A673 (cell line): ENCODE measurements at regions of chr5 and their contacts with region 1.

Region 1: GRCh38 chr5:102536323-102536928 is 37.6 kb upstream of the SLCO6A1 start:
- DNase-seq: peak; percentile 42
- H3K4me3 ChIP-seq: no peak overlapping the region
- H3K27ac ChIP-seq: no peak overlapping the region
- H3K4me1 ChIP-seq: no peaks in the 10 kb centered on the region
- H3K27me3 ChIP-seq: no peaks in the 10 kb centered on the region
- CTCF ChIP-seq: peak; percentile 63

Region 2: DNA sequence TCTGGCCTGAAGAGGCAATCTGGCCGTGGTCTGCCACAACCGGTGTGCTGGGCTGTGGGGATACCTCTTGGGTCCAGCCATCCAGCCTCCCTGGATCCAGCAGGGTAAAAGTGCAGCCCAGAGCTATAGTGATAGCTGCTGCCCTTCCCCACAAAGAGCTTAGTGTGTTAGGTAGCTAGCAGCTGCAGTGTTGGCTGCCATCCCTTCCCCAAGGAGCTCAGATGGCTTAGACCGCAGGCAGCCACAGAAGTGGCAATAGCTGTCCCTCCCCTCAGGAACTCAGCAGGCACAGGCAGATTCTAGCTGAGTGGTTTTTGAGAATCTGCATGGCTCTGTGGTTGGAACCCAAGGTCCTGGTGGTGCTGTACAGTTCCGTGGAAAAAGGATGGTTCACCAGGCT is 543.4 kb after region 1 on chr5:
- CTCF ChIA-PET with region 1: no interaction called
- POLR2A ChIA-PET with region 1: no interaction called
- intact Hi-C with region 1: no loop called
- DNase-seq: no peak
- H3K4me3 ChIP-seq: no peak overlapping the region
- H3K27ac ChIP-seq: no peak overlapping the region
- H3K4me1 ChIP-seq: no peaks in the 10 kb centered on the region
- H3K27me3 ChIP-seq: no peaks in the 10 kb centered on the region
- CTCF ChIP-seq: no peak

Region 3: GRCh38 chr5:103139264-103139865 is 602.9 kb after region 1 on chr5:
- CTCF ChIA-PET with region 1: no interaction called
- POLR2A ChIA-PET with region 1: no interaction called
- intact Hi-C with region 1: loop called (anchors 2 kb)
- DNase-seq: peak; percentile 82
- H3K4me3 ChIP-seq: no peak overlapping the region
- H3K27ac ChIP-seq: no peak overlapping the region
- H3K4me1 ChIP-seq: no peaks in the 10 kb centered on the region
- H3K27me3 ChIP-seq: no peaks in the 10 kb centered on the region
- CTCF ChIP-seq: peak; percentile 96

Region 4: DNA sequence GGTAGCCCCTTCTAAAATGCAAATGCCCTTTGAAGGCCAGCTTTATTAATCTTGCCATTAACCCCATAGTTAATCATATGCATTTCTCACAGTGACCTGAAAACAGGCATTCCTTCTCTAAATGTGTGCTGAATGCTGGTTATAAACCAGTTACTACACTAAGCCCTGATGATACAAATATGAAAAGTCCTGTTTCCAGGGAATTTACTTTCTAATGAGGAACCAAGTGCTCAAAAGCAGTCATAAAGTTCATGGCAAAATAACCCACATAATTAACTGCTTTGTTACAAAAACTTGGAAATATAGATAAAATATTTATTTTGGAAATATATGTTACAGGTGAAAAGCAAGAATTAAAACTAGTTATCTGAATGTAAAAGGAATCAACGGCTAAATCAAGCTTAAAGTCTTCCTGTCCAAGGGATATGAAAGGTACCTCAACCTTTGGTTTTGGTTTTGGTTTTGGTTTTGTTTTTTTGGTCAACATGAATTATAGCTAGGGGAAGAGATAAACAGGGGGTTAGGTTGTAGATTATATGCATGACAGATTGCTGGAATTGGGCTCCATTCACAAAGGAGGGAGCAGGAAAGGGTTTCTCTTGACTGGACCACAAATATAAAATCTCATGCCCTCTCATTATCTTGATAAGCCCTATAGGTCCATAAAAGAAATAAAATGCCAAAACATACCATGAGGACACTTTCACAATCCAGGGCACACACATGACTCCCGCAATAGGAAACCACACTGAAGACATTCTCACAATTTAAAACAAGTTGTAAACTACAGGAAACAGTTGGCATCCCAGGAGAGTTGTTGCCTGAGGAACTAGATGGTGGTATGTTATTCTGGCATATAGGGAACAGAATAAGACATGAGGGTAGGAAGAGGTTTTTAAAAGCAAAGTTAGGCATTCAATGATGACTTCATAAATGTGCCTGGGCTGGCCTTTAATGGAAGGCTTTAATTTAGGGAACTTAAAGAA is 675.4 kb after region 1 on chr5:
- CTCF ChIA-PET with region 1: no interaction called
- POLR2A ChIA-PET with region 1: no interaction called
- intact Hi-C with region 1: no loop called
- DNase-seq: peak; percentile 70
- H3K4me3 ChIP-seq: no peak overlapping the region
- H3K27ac ChIP-seq: no peak overlapping the region
- H3K4me1 ChIP-seq: peaks cover 14% of the 10 kb centered on the region
- H3K27me3 ChIP-seq: no peaks in the 10 kb centered on the region
- CTCF ChIP-seq: no peak

Region 5: GRCh38 chr5:103224118-103224893 is 687.9 kb after region 1 on chr5:
- CTCF ChIA-PET with region 1: interaction called, 7 read pairs
- POLR2A ChIA-PET with region 1: no interaction called
- intact Hi-C with region 1: loop called (anchors 5 kb)
- DNase-seq: peak; percentile 87
- H3K4me3 ChIP-seq: peak overlapping the region; percentile 19
- H3K27ac ChIP-seq: no peak overlapping the region
- H3K4me1 ChIP-seq: peaks cover 3% of the 10 kb centered on the region
- H3K27me3 ChIP-seq: no peaks in the 10 kb centered on the region
- CTCF ChIP-seq: peak; percentile 83